Caco-2 (cell line): ENCODE measurements at regions of chr20 and their contacts with region 1.

Region 1: DNA sequence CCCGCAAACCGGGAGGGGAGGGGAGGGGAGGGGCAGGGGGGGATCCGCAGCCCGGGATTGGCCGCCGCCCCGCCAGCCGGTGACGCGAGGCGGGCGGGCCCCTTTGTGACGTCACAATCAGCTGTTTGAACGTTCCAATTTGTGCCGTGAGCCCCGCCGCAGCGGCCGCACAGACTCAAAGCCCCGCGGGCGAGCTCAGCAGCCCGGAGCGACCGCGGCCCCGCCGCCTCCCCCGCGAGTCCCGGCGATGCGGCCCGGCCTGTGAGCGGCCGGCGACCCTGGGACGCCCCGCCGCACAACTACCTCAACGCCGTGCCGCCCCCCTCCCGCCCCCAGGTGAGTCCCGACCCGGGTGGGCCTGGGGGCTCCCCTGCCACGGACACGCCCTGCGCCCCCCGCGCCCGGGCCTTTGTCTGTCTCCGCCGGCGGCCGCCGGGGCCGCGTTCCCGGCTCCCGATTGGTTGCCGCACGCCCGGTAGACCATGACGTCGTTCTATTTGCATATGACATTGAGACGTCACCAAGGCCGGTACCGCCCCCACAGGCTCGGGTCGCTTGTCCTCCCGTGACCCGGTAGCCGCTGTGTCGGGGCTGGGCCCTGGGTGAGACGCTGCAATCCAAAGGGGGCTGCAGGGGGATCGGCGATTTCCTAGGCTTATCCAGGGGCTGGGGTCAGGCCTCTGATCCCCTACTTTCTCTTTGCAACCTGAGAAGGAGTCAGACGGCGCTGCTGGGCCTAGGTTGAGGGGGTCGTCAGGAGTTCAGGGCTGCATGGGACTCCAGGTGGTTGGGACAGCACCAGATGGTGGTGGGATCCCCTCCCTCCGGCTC is at the start of gene TP53INP2:
- DNase-seq: peak; percentile 99
- H3K4me3 ChIP-seq: peak within 1 kb of the TSS; percentile 48
- H3K4me3 Mint-ChIP-seq: peak within 1 kb of the TSS; percentile 99
- H3K27ac Mint-ChIP-seq: peak within 1 kb of the TSS; percentile 99
- H3K4me1 ChIP-seq: peaks cover 34% of the 10 kb centered on the region
- H3K4me1 Mint-ChIP-seq: peaks cover 44% of the 10 kb centered on the region
- H3K27me3 ChIP-seq: no peaks in the 10 kb centered on the region
- H3K27me3 Mint-ChIP-seq: peaks cover 3% of the 10 kb centered on the region
- CTCF ChIP-seq: no peak
- total RNA-seq, gene TP53INP2: 26.2 and 29.7 TPM in 2 replicates

Region 2: GRCh38 chr20:34302723-34303528 is 401.5 kb before region 1 on chr20 and contains the start of gene AHCY:
- CTCF ChIA-PET with region 1: no interaction called
- POLR2A ChIA-PET with region 1: no interaction called
- intact Hi-C with region 1: loop called (anchors 2 kb)
- DNase-seq: peak; percentile 100
- H3K4me3 ChIP-seq: peak within 1 kb of the TSS; percentile 73
- H3K4me3 Mint-ChIP-seq: no peak within 1 kb of the TSS
- H3K27ac Mint-ChIP-seq: peak within 1 kb of the TSS; percentile 90
- H3K4me1 ChIP-seq: peaks cover 46% of the 10 kb centered on the region
- H3K4me1 Mint-ChIP-seq: peaks cover 15% of the 10 kb centered on the region
- H3K27me3 ChIP-seq: no peaks in the 10 kb centered on the region
- H3K27me3 Mint-ChIP-seq: no peaks in the 10 kb centered on the region
- CTCF ChIP-seq: no peak
- total RNA-seq, gene AHCY: 665 and 691 TPM in 2 replicates

Region 3: DNA sequence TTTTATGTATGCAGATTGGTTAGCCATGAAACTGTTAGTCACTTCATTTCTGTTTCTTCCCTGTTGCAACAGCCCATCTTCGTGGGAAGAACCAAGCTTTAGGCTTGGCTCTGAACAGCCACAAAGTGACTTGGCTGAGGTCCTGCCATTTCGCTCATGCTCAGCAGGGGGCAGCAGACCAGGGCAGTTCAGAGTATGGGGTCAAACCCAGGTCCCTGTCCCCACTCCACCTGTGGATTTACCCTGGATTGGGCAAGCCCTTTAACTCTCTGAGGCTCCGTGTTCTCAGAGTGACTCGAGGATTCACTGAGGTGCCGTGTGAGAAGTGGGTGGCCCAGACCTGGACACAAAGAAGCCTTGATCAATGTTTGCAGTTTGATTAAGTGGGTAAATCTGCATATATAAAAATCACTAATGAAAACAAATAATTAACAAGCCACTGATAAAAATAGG is 165.7 kb before region 1 on chr20:
- CTCF ChIA-PET with region 1: interaction called, 15 read pairs
- POLR2A ChIA-PET with region 1: interaction called, 3 read pairs
- intact Hi-C with region 1: loop called (anchors 1 kb)
- DNase-seq: peak; percentile 83 to 90
- H3K4me3 ChIP-seq: no peak overlapping the region
- H3K4me3 Mint-ChIP-seq: no peak overlapping the region
- H3K27ac Mint-ChIP-seq: peak overlapping the region; percentile 16
- H3K4me1 ChIP-seq: no peaks in the 10 kb centered on the region
- H3K4me1 Mint-ChIP-seq: no peaks in the 10 kb centered on the region
- H3K27me3 ChIP-seq: no peaks in the 10 kb centered on the region
- H3K27me3 Mint-ChIP-seq: no peaks in the 10 kb centered on the region
- CTCF ChIP-seq: peak; percentile 98 to 99

Region 4: GRCh38 chr20:34579191-34579978 is 125.0 kb before region 1 on chr20:
- CTCF ChIA-PET with region 1: interaction called, 10 read pairs
- POLR2A ChIA-PET with region 1: interaction called, 5 read pairs
- intact Hi-C with region 1: loop called (anchors 1 kb)
- DNase-seq: peak in 1 of 2 experiments; percentile 59
- H3K4me3 ChIP-seq: no peak overlapping the region
- H3K4me3 Mint-ChIP-seq: no peak overlapping the region
- H3K27ac Mint-ChIP-seq: no peak overlapping the region
- H3K4me1 ChIP-seq: peaks cover 20% of the 10 kb centered on the region
- H3K4me1 Mint-ChIP-seq: peaks cover 9% of the 10 kb centered on the region
- H3K27me3 ChIP-seq: no peaks in the 10 kb centered on the region
- H3K27me3 Mint-ChIP-seq: no peaks in the 10 kb centered on the region
- CTCF ChIP-seq: peak in 1 of 2 experiments; percentile 82

Region 5: GRCh38 chr20:34632870-34633452 is 71.4 kb before region 1 on chr20:
- CTCF ChIA-PET with region 1: interaction called, 3 read pairs
- POLR2A ChIA-PET with region 1: no interaction called
- intact Hi-C with region 1: loop called (anchors 2 kb)
- DNase-seq: peak in 1 of 2 experiments; percentile 30
- H3K4me3 ChIP-seq: no peak overlapping the region
- H3K4me3 Mint-ChIP-seq: no peak overlapping the region
- H3K27ac Mint-ChIP-seq: peak overlapping the region; percentile 61
- H3K4me1 ChIP-seq: peaks cover 24% of the 10 kb centered on the region
- H3K4me1 Mint-ChIP-seq: peaks cover 28% of the 10 kb centered on the region
- H3K27me3 ChIP-seq: no peaks in the 10 kb centered on the region
- H3K27me3 Mint-ChIP-seq: no peaks in the 10 kb centered on the region
- CTCF ChIP-seq: no peak

Region 6: GRCh38 chr20:34747479-34747878 is 43.1 kb after region 1 on chr20:
- CTCF ChIA-PET with region 1: no interaction called
- POLR2A ChIA-PET with region 1: no interaction called
- intact Hi-C with region 1: no loop called
- DNase-seq: no peak
- H3K4me3 ChIP-seq: no peak overlapping the region
- H3K4me3 Mint-ChIP-seq: no peak overlapping the region
- H3K27ac Mint-ChIP-seq: no peak overlapping the region
- H3K4me1 ChIP-seq: no peaks in the 10 kb centered on the region
- H3K4me1 Mint-ChIP-seq: no peaks in the 10 kb centered on the region
- H3K27me3 ChIP-seq: no peaks in the 10 kb centered on the region
- H3K27me3 Mint-ChIP-seq: no peaks in the 10 kb centered on the region
- CTCF ChIP-seq: no peak

Region 7: DNA sequence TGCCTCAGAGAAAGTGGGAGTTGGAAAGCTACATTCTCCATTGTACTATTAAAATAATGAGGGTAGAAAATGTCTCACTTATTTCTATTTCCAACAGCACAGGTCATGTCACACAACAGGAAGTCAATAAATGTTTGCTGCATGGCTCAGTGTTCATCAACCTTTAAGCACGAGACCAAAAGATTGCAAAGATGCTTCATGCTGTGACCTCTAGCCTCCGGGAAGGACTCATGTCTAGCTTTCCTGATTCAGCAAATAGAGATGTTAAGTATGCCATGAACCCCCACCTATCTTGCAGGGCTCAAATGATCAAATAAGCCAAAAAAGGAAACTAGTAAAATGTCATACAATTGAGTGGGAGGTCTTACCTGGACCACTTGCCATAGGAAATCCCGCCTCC is 63.7 kb after region 1 on chr20:
- CTCF ChIA-PET with region 1: interaction called, 14 read pairs
- POLR2A ChIA-PET with region 1: interaction called, 4 read pairs
- intact Hi-C with region 1: loop called (anchors 5 kb)
- DNase-seq: no peak
- H3K4me3 ChIP-seq: no peak overlapping the region
- H3K4me3 Mint-ChIP-seq: no peak overlapping the region
- H3K27ac Mint-ChIP-seq: no peak overlapping the region
- H3K4me1 ChIP-seq: 0 out of 2 replicates have a peak, but pooled peaks cover 4% of the 10 kb centered on the region
- H3K4me1 Mint-ChIP-seq: peaks cover 7% of the 10 kb centered on the region
- H3K27me3 ChIP-seq: no peaks in the 10 kb centered on the region
- H3K27me3 Mint-ChIP-seq: no peaks in the 10 kb centered on the region
- CTCF ChIP-seq: no peak